ENCODE measurements at regions of chr18 and their contacts with region 1.

Region 1: DNA sequence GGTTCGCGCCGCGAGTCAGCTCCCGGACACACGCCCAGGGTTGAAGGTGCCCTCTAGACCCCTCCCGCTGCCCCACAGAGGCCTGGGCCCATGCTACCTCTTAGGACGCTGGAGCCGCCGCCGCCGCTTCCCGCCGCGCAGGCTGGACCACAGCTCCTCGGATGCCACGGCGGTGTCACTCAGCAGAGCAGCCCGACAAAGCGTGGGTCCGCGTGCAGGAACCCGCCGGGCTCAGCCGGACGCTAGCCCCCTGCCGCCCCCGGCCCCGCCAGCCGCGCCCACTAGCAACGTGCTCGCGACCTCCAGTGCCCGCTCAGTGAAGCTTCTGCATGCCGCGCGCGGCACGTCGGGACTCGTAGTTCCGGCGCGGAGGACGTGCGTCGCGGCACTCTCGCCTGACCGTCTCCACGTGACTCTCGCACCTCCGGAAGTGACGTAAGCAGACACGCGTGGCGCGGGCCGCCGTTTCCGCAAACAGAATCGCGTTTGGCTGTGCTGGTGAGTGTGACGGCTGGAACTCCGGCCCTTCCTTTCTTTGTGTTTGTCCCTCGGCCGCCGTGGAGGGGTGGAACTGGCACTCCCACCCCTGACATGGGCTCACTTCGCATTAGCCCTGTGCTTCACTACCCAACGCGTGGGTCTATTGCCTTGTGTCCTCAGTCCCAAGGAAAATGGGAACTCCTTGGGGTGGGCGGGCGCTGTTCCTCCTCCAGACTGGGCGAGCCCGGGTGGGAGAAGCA is at the starts of genes FAM210A and RNMT:
- DNase-seq: peak; percentile 99
- ATAC-seq: peak; percentile 98
- total RNA-seq, gene FAM210A: 58.1 TPM
- total RNA-seq, gene RNMT: 22.2 TPM

Region 2: GRCh38 chr18:13558124-13558523 is 168.3 kb before region 1 on chr18:
- intact Hi-C with region 1: loop called (anchors 5 kb)
- DNase-seq: no peak
- ATAC-seq: peak; percentile 84

Region 3: DNA sequence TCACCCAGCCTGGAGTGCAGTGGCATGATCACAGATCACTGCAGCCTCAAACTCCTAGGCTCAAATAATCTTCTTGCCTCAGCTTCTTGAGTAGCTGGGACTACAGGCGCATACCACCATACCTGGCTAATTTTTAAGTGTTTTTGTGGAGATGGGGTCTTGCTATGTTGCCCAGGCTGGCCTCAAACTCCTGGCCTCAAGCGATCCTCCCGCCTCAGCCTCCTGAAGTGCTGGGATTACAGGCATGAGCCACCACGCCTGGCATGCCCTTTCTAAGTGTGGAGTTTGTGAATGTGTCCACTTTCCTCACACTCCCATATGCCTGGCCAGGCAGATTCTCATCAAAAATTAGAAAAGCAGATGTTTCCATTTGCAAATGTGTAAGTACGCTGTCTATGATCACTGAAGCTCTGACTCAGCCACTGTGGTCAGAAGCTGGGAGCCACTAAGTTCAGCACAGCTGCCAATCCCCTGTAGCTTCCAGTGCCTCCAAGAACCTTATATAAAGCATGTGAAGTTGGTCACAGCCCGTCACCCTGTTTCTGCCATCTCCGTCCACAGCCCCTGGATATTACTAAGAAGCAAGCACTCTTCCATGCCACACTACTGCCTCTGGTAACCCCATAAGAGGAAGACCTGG is 155.4 kb before region 1 on chr18:
- intact Hi-C with region 1: no loop called
- DNase-seq: no peak
- ATAC-seq: no peak

Region 4: GRCh38 chr18:13641551-13642439 is 84.6 kb before region 1 on chr18:
- intact Hi-C with region 1: loop called (anchors 2 kb)
- DNase-seq: peak; percentile 79
- ATAC-seq: peak; percentile 61

Region 5: DNA sequence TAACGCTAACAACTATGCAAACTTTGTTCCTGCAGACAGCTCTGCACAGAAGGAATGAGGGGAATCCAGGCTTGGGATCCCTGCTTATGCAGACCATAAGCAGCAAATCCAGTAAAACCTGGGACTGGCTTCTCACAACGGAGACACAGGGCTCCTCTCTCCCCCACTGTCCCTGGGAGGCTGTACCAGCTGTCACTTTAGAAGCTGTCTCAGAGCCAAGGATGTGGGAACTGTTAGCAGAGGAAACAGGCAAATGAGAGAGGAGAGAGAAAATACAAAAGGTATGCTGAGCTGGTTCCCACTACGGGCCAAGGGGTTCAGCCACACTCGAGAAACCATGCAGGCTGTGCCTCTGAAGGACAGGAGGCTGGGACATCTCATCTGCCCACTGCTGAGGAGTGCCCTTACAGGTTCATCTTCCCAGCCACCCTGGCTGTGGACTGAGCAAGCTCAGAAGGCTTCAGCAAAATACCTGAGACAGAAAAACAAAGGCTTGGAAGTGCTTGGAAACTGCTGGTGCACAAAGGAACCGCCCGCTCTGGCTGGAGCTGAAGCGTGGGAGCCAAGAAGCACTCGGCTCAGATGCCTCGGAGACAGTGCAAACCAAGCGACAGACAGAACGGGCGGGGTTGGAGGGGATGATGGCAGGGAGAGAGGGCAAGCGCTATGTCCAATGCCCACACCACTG is 72.5 kb before region 1 on chr18:
- intact Hi-C with region 1: no loop called
- DNase-seq: no peak
- ATAC-seq: peak; percentile 42

Region 6: DNA sequence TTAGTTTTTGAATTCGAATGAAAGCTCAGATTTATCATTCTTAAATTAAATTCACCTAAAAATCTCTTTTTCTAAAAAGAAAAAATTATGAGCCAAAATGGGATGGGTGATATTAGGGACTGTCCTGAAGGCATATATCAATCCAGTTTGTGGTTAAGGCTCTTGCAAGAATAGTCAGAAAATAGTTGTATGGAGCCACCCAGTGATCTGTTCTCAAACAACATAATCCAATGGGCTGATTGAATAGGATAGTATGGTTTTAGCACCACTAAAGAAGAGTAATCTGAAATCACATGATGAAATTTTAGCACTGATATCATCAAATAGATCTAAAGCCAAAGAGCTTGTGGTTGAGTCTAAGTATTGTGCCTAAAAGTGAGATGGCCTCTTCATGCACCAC is 317.5 kb after region 1 on chr18:
- intact Hi-C with region 1: no loop called
- DNase-seq: no peak
- ATAC-seq: no peak

Measured in Right ventricle myocardium inferior (tissue), 1 donor.